ENCODE measurements at regions of chr4 and their contacts with region 1.

Region 1: GRCh38 chr4:143358923-143359643 is 22.4 kb downstream of the GAB1 start:
- DNase-seq: no peak
- H3K4me3 Mint-ChIP-seq: peak overlapping the region; percentile 62
- H3K27ac Mint-ChIP-seq: peak overlapping the region; percentile 84
- H3K4me1 Mint-ChIP-seq: peaks cover 18% of the 10 kb centered on the region
- H3K27me3 Mint-ChIP-seq: peaks cover 5% of the 10 kb centered on the region

Region 2: DNA sequence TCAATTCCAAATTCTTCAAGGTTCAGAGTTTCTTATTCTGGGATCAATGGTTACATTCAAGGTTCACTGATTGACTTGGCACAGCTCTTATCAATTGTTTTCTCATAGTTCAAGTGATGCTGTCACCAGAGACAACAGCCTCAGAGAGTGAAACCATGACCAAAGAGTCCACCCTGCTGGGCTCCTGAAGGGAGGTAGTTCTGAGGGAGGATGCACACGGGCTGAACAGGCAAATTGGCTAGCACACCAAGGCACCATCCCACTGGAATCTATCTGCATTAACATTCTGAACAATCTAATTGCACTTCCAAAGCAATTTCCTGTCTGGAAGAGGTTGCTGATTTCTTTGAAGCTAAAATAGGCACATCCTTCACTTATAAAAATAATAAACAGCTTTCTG is 39.0 kb before region 1 on chr4:
- intact Hi-C with region 1: no loop called
- DNase-seq: no peak
- H3K4me3 Mint-ChIP-seq: no peak overlapping the region
- H3K27ac Mint-ChIP-seq: no peak overlapping the region
- H3K4me1 Mint-ChIP-seq: no peaks in the 10 kb centered on the region
- H3K27me3 Mint-ChIP-seq: peaks cover 2% of the 10 kb centered on the region

Region 3: DNA sequence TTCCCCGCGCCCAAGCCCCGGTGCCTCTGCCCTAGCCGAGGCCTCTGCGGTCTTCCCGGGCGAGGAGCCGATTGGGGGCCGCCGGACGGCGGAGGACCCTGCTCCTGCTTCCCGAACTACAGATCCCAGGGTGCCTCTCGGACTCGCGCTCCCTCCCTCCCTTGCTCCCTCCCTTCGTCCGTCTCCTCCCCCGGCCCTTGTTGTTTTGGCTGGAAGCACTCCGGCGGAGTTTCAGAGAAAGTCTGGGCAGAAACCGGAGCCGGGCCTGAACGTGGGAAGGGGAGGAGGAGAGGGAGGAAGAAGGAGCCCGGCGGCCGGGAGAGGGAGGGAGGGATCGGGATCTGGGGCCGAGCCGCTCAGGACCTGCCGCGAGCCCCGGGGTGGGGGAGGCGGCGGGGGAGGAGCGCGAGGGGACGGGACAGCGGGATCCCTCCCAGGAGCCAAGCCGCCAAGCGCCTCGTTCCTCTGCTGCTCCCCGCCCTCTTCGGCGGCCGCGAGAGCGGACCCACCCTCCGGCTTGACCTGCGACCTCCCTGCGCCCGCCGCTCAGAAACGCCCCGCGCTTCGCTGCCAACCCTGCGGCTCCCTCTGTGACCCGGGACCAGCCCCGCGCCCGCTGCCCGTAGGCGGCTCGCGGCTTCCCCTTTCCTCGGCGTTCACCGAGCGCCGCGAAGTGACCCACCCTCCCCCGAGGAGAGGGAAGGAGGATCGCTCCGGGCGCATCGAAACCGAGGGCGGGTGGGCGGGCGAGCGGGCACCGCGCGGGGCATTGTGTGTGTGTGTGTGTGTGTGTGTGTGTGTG is 22.9 kb before region 1 on chr4:
- intact Hi-C with region 1: loop called (anchors 2 kb)
- DNase-seq: peak; percentile 4
- H3K4me3 Mint-ChIP-seq: peak overlapping the region; percentile 89
- H3K27ac Mint-ChIP-seq: no peak overlapping the region
- H3K4me1 Mint-ChIP-seq: peaks cover 6% of the 10 kb centered on the region
- H3K27me3 Mint-ChIP-seq: peaks cover 56% of the 10 kb centered on the region